Activated naive CD4-positive, alpha-beta T cell treated with anti-CD3 and anti-CD28 coated beads for 36 hours (primary cell): ENCODE measurements at regions of chr12 and their contacts with region 1.

Region 1: DNA sequence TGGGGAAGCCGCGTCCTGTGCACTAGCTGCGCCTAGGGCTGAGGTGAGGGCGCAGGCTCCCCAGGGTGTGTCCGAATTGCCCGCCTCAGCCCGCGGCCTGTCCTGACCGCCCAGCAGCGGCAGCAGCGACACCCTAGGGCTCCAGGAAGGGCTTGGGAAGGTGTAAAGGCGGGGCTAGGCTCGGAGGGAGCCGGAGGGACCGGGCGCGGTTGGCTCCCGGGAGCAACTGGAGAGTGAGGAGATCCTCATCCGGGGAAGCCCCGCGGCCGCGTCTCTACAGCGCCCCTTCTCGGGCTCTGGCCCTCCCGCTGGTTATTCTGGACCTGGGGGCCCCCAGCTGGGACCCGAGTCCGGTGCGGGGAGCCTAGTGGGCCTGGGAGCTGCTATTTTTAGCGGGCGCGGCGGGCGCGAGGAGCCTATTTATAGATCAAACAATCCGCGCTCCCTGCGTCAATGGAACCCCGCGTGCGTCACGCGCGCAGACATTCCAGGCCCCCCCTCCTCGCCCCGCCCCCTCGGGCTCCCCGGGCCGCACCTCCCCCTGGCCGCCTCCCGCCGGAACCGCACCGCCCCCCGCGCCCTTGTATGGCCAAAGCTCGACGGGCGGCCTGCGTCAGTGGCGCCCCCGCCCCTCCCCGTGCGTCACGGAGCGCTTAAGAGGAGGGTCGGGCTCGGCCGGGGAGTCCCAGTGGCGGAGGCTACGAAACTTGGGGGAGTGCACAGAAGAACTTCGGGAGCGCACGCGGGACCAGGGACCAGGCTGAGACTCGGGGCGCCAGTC is at the start of gene NR4A1:
- DNase-seq: peak; percentile 99
- H3K4me3 Mint-ChIP-seq: peak within 1 kb of the TSS; percentile 98
- H3K27ac Mint-ChIP-seq: peak within 1 kb of the TSS; percentile 84
- H3K4me1 Mint-ChIP-seq: peaks cover 44% of the 10 kb centered on the region
- H3K27me3 Mint-ChIP-seq: no peaks in the 10 kb centered on the region
- total RNA-seq, gene NR4A1: 64.2 to 64.8 TPM

Region 2: DNA sequence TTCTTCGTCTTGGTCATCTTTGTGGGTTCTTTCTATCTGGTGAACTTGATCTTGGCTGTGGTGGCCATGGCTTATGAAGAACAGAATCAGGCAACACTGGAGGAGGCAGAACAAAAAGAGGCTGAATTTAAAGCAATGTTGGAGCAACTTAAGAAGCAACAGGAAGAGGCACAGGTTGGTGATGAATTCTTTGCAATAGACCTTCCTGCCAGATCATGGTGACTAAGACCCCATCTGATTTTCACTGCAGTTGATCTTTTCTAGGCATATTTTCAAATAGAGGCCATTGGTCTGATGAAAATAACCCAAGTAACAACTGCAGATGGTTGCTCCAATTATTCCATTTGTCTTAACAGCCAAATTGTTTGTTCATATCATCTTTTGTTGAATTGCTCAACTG is 345.5 kb before region 1 on chr12:
- CTCF ChIA-PET with region 1: no interaction called
- intact Hi-C with region 1: no loop called
- DNase-seq: no peak
- H3K4me3 Mint-ChIP-seq: no peak overlapping the region
- H3K27ac Mint-ChIP-seq: no peak overlapping the region
- H3K4me1 Mint-ChIP-seq: peaks cover 1% of the 10 kb centered on the region
- H3K27me3 Mint-ChIP-seq: no peaks in the 10 kb centered on the region

Region 3: DNA sequence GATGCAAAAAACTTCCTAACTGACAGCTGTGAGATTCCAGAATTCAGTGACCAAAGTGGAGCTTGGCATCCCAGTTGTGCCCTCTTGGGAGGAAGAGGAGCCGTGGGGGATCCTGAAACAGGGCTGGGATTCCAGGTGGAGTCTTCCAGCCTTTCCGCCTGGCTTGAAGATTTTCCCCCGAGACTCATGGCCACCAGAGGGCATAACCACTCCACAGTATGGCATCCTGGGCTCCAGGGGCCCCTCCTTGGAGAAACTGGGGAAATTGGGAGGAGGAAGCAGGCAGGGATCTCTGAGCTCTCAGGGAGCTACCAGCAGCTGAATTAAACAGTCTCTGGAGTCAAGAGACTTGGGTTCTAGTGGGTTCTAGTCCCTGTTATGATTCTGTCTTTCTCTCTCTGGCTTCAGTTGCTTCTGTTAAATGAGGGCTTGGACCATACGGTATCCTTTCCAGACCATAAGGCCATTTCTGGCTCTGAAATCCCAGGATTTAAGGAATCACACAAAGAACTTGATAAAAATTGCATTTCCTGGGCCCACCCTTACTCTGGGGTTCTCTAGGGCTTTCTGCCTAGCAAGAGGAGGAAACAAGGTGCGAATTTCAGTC is 46.8 kb before region 1 on chr12:
- CTCF ChIA-PET with region 1: no interaction called
- intact Hi-C with region 1: loop called (anchors 2 kb)
- DNase-seq: peak; percentile 43
- H3K4me3 Mint-ChIP-seq: no peak overlapping the region
- H3K27ac Mint-ChIP-seq: no peak overlapping the region
- H3K4me1 Mint-ChIP-seq: peaks cover 20% of the 10 kb centered on the region
- H3K27me3 Mint-ChIP-seq: peaks cover 3% of the 10 kb centered on the region

Region 4: GRCh38 chr12:52069327-52070184 is 18.6 kb after region 1 on chr12 and contains the start of gene ATG101:
- CTCF ChIA-PET with region 1: interaction called, 13 read pairs
- intact Hi-C with region 1: loop called (anchors 1 kb)
- DNase-seq: peak; percentile 92
- H3K4me3 Mint-ChIP-seq: peak within 1 kb of the TSS; percentile 93
- H3K27ac Mint-ChIP-seq: peak within 1 kb of the TSS; percentile 98
- H3K4me1 Mint-ChIP-seq: peaks cover 44% of the 10 kb centered on the region
- H3K27me3 Mint-ChIP-seq: no peaks in the 10 kb centered on the region
- total RNA-seq, gene ATG101: 21.8 to 22.0 TPM